MCF 10A (cell line): ENCODE measurements at regions of chr2 and their contacts with region 1.

Region 1: GRCh38 chr2:57906152-57906732 is 140.4 kb upstream of the VRK2 start:
- DNase-seq: peak; percentile 71
- H3K4me3 Mint-ChIP-seq: no peak overlapping the region
- H3K27ac Mint-ChIP-seq: no peak overlapping the region
- H3K4me1 Mint-ChIP-seq: peaks cover 6% of the 10 kb centered on the region
- H3K27me3 Mint-ChIP-seq: no peaks in the 10 kb centered on the region
- CTCF ChIP-seq: peak; percentile 80

Region 2: DNA sequence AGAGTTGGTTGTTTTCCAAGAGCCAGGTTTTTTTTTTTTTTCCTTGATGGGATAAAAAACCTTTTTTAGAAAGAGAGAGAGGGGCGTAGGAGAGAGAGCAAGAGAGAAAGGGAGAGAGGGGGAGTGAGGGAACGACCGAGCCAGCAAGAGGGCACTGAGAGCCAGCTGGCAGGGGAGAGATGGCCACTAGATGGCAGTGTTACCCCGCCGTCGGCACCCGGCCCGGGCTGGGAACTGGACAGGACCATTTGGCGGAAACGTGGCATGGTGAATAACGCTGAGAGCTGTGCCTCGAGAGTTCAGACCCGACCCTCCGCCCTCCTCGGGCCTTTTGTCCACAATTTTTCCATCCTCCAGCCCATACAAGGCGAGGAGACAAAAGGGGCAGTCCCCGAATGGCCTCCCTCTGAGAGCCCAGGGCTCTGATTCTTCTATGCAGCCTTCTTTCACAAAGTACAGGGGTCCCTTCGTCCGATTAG is 146.4 kb before region 1 on chr2:
- CTCF ChIA-PET with region 1: interaction called, 6 read pairs
- POLR2A ChIA-PET with region 1: no interaction called
- intact Hi-C with region 1: loop called (anchors 1 kb)
- DNase-seq: peak; percentile 81
- H3K4me3 Mint-ChIP-seq: peak overlapping the region; percentile 57
- H3K27ac Mint-ChIP-seq: peak overlapping the region; percentile 46
- H3K4me1 Mint-ChIP-seq: peaks cover 5% of the 10 kb centered on the region
- H3K27me3 Mint-ChIP-seq: no peaks in the 10 kb centered on the region
- CTCF ChIP-seq: peak; percentile 92

Region 3: GRCh38 chr2:58106896-58107295 is 200.7 kb after region 1 on chr2:
- CTCF ChIA-PET with region 1: no interaction called
- POLR2A ChIA-PET with region 1: no interaction called
- intact Hi-C with region 1: no loop called
- DNase-seq: no peak
- H3K4me3 Mint-ChIP-seq: no peak overlapping the region
- H3K27ac Mint-ChIP-seq: peak overlapping the region; percentile 89
- H3K4me1 Mint-ChIP-seq: peaks cover 37% of the 10 kb centered on the region
- H3K27me3 Mint-ChIP-seq: no peaks in the 10 kb centered on the region
- CTCF ChIP-seq: no peak

Region 4: DNA sequence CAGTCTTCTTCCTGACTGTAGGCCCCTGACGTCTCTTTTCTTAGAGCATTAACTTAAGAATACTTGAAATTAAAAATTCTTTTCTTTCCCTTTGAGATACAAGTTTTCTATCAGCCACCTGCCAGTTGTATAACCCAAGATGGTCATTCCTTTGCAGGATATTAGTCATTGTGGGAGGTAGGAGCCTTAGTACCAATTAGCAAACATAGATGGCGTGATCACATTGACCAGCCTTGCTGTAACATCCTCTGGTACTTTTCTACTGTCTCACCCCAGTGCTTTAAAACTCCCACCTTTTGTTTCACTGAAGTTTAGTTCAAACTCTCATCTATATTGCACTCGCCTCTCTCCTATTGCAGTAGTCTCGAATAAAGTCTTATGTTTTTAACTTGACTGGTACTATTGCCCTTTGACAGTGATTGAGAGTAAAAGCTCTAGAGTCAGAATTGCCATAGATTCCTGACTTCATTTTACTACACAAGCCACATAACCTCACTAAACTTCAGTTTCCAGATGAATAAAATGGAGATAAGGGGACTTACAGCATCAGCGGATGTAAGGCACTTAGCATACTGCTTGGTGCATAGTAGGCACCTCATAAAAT is 214.5 kb after region 1 on chr2:
- CTCF ChIA-PET with region 1: interaction called, 3 read pairs
- POLR2A ChIA-PET with region 1: no interaction called
- intact Hi-C with region 1: loop called (anchors 1 kb)
- DNase-seq: no peak
- H3K4me3 Mint-ChIP-seq: no peak overlapping the region
- H3K27ac Mint-ChIP-seq: no peak overlapping the region
- H3K4me1 Mint-ChIP-seq: peaks cover 27% of the 10 kb centered on the region
- H3K27me3 Mint-ChIP-seq: no peaks in the 10 kb centered on the region
- CTCF ChIP-seq: no peak

Region 5: GRCh38 chr2:58215429-58215828 is 309.2 kb after region 1 on chr2:
- CTCF ChIA-PET with region 1: no interaction called
- POLR2A ChIA-PET with region 1: no interaction called
- intact Hi-C with region 1: loop called (anchors 2 kb)
- DNase-seq: no peak
- H3K4me3 Mint-ChIP-seq: no peak overlapping the region
- H3K27ac Mint-ChIP-seq: no peak overlapping the region
- H3K4me1 Mint-ChIP-seq: peaks cover 6% of the 10 kb centered on the region
- H3K27me3 Mint-ChIP-seq: no peaks in the 10 kb centered on the region
- CTCF ChIP-seq: no peak

Region 6: GRCh38 chr2:58460670-58461069 is 554.4 kb after region 1 on chr2:
- CTCF ChIA-PET with region 1: no interaction called
- POLR2A ChIA-PET with region 1: no interaction called
- intact Hi-C with region 1: no loop called
- DNase-seq: no peak
- H3K4me3 Mint-ChIP-seq: no peak overlapping the region
- H3K27ac Mint-ChIP-seq: no peak overlapping the region
- H3K4me1 Mint-ChIP-seq: no peaks in the 10 kb centered on the region
- H3K27me3 Mint-ChIP-seq: no peaks in the 10 kb centered on the region
- CTCF ChIP-seq: no peak

Region 7: DNA sequence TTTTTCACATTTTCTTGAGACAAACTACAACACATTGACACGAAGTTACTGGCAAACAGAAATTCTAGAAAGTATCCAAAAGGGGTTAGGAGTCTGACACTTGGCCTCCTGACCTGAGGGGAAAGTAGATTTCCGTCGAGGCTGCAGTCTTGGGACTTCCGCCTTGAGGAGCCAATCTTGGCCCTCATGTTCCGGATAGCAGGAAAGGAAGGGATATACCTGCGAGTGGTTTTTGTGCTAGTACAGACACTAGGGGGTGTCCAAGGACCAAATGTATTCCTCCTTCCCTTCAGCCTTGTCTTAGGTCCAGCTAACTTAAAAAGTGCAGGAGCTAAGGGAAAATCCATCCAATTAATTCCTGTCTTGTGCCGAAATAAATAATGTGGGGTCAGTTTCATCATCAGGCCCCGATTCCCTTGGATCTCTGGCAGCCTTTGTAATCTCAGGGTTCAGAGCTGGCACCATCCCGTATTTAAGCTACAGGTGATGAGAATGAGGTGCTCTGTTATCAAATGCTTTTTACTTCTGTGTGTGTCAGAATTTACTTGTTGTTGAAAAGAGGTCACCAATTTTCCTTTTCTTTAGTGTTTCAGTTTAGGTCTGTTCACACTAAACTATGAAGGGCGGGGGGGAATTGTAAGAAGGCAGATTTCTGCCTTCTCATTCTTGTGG is 665.1 kb after region 1 on chr2:
- CTCF ChIA-PET with region 1: interaction called, 3 read pairs
- POLR2A ChIA-PET with region 1: no interaction called
- intact Hi-C with region 1: loop called (anchors 2 kb)
- DNase-seq: peak; percentile 88
- H3K4me3 Mint-ChIP-seq: no peak overlapping the region
- H3K27ac Mint-ChIP-seq: peak overlapping the region; percentile 75
- H3K4me1 Mint-ChIP-seq: peaks cover 18% of the 10 kb centered on the region
- H3K27me3 Mint-ChIP-seq: no peaks in the 10 kb centered on the region
- CTCF ChIP-seq: peak; percentile 87

Region 8: GRCh38 chr2:58629545-58630119 is 723.4 kb after region 1 on chr2:
- CTCF ChIA-PET with region 1: no interaction called
- POLR2A ChIA-PET with region 1: no interaction called
- intact Hi-C with region 1: no loop called
- DNase-seq: no peak
- H3K4me3 Mint-ChIP-seq: no peak overlapping the region
- H3K27ac Mint-ChIP-seq: peak overlapping the region; percentile 57
- H3K4me1 Mint-ChIP-seq: peaks cover 28% of the 10 kb centered on the region
- H3K27me3 Mint-ChIP-seq: no peaks in the 10 kb centered on the region
- CTCF ChIP-seq: no peak

Region 9: GRCh38 chr2:58762176-58762781 is 856.0 kb after region 1 on chr2:
- CTCF ChIA-PET with region 1: no interaction called
- POLR2A ChIA-PET with region 1: no interaction called
- intact Hi-C with region 1: loop called (anchors 2 kb)
- DNase-seq: peak; percentile 81
- H3K4me3 Mint-ChIP-seq: no peak overlapping the region
- H3K27ac Mint-ChIP-seq: no peak overlapping the region
- H3K4me1 Mint-ChIP-seq: peaks cover 6% of the 10 kb centered on the region
- H3K27me3 Mint-ChIP-seq: no peaks in the 10 kb centered on the region
- CTCF ChIP-seq: peak; percentile 69